GM10248 (cell line): ENCODE measurements at regions of chr7 and their contacts with region 1.

Region 1: DNA sequence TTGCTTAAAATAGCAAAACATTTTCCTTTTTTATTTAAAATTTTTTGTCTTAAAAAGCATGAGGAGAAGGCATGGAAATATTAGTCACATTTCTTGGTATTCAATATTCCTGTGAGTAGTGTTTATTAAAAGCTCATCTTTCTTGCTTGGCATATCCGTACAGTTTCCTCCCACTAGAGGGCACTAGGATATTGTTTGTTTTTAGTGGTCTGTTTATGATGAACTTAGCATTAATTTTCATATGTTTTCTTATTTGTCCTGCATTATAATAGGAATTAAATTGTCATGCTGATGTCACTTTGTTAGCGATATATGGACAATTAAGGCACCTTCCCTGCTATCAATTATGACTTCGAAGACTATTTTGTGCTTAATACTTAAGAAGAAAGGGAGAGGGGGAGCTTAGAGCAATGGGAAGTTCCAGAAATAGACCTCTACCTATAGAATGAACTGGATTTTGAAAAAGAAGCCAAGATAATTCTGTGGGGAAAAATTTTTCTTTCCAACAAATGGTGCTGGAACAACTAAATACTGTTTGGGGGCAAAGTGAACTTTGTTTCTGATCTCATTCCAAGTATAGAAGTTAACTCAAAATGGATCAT is 91.0 kb upstream of the STRIP2 start:
- DNase-seq: peak; percentile 44
- CTCF ChIP-seq: peak; percentile 70

Region 2: GRCh38 chr7:128799451-128799850 is 543.7 kb before region 1 on chr7:
- CTCF ChIA-PET with region 1: no interaction called
- POLR2A ChIA-PET with region 1: no interaction called
- DNase-seq: no peak
- CTCF ChIP-seq: no peak

Region 3: GRCh38 chr7:129126314-129126713 is 216.9 kb before region 1 on chr7:
- CTCF ChIA-PET with region 1: no interaction called
- POLR2A ChIA-PET with region 1: no interaction called
- DNase-seq: no peak
- CTCF ChIP-seq: no peak

Region 4: DNA sequence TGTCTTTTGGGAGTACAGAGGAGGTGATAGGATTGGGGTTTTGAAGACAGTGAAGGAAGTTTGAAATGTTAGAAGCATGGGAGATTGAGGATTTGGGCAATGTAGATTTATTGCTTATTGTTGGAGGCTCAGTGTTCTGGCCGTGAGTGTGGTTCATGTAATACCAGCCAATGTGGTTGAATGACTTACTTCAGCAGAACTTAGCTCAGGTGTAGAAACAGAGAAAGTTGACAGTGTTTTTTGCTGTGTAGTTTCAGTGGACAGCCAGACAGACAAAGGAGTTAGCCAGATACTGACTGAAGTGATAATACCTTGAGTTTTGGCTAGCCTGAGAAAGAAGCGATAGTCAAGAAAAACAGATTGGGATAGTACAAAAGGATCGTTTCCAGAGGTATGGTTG is 29.9 kb before region 1 on chr7:
- CTCF ChIA-PET with region 1: no interaction called
- POLR2A ChIA-PET with region 1: no interaction called
- DNase-seq: no peak
- CTCF ChIP-seq: no peak

Region 5: DNA sequence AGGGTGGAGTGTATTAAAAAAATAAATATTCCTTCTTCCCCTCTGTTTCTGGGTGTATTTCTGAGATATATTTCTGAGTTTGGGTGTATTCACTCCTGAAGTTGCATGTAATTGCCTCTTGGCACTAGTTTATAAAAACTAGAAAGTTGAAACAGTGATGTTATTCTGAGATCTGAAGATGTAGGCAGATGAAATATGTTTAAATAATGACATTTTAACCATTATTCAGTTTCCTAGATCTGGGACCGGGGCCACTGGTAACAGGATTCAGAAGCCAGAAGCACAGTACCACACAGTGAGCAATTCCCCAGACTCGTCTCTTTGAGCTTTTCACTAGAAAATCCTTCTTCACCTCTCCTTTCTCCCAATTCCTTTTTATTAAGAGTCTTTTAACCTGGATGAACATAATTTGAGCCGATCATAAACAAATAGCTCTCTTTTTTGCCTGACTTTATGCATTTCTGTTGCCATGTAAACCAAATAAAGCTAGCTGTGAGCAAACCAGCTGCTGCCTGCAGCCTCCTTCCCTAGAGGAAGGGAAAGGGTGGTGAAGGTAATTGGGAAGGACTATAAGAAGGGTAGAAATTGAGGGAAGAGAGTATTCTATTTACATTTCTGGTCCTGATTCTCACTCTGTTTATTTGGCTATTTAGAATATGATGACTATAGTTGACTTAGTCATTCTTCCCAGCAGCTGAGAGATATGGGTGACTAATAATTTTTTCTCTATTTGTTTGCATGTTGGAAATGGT is 10.7 kb before region 1 on chr7:
- CTCF ChIA-PET with region 1: interaction called, 12 read pairs
- POLR2A ChIA-PET with region 1: no interaction called
- DNase-seq: no peak
- CTCF ChIP-seq: no peak

Region 6: DNA sequence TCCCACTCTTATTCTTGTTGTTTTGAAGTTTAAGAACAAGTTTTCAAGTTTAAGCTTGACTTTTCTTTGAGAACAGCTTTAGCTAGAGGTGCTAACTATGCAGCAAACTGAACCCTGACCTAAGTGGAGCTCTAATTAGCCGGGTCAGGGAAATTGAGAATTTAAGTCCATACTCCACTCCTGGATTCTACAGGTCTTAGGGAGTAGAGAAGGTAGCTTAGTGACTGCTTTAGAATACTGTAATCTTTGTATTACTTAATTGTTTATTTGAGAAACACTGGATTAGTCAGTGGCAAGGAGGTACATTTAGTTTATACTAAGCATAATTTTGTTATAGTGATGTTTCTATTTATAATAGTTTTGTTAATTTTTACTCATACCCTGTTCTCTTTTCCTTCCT is 16.4 kb after region 1 on chr7:
- CTCF ChIA-PET with region 1: interaction called, 12 read pairs
- POLR2A ChIA-PET with region 1: no interaction called
- DNase-seq: no peak
- CTCF ChIP-seq: no peak